HepG2 (cell line): ENCODE measurements at regions of chr22 and their contacts with region 1.

Region 1: DNA sequence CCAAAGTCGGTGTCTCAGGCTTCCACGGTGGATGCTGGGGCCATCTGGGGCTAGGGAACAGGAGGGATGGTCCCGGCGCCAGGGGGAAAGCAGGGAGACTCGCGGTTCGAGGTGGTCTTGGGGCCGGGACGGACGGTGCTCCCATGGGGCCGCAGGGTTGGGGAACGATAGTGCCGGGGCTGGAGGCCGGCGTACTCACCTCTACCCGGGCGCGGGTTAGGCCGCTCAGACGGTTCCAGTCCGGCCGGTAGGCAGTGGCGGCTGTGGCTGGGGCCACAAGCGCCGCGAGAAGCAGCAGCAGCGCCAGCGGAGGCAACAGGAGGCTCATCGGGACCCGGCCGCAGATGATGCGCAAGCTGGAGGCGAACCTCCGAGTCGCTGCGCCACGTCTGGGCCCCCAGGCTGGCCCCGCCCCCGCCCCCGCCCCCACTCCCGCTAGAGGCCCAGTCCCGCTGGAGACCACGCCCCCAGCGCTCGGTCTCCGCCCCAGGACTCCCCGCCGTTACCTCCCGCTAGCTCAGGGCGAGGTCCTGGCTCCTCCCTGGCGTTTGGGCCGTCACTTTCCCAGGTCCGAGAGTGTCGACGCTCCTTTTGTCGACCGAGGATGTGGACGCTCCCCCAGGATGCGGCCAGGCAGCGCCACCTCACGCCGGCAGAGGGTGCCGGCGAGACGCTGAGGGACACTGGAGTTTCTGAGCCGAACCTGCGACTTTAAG is at the start of gene SELENOM:
- DNase-seq: peak; percentile 86
- ATAC-seq: peak; percentile 90
- H3K4me3 ChIP-seq: peak within 1 kb of the TSS; percentile 39 to 64 (median 44); a peak in 5 of 6 replicates
- H3K27ac ChIP-seq: no peak within 1 kb of the TSS
- H3K4me1 ChIP-seq: peaks cover 28% of the 10 kb centered on the region
- H3K27me3 ChIP-seq: no peaks in the 10 kb centered on the region
- CTCF ChIP-seq: peak; percentile 95
- EP300 ChIP-seq: no peak
- POLR2A ChIP-seq: no peak
- RAD21 ChIP-seq: peak; percentile 90
- total RNA-seq, gene SELENOM: 2.4 and 4.1 TPM in 2 replicates

Region 2: GRCh38 chr22:30555282-30556210 is 551.8 kb before region 1 on chr22:
- CTCF ChIA-PET with region 1: no interaction called
- POLR2A ChIA-PET with region 1: no interaction called
- in situ Hi-C with region 1: no loop called
- intact Hi-C with region 1: no loop called
- DNase-seq: no peak
- ATAC-seq: 0 out of 3 replicates have a peak, but pooled peaks have one; percentile 17
- H3K4me3 ChIP-seq: no peak overlapping the region
- H3K27ac ChIP-seq: no peak overlapping the region
- H3K4me1 ChIP-seq: peaks cover 13% of the 10 kb centered on the region
- H3K27me3 ChIP-seq: no peaks in the 10 kb centered on the region
- CTCF ChIP-seq: peak; percentile 64
- EP300 ChIP-seq: no peak
- POLR2A ChIP-seq: no peak
- RAD21 ChIP-seq: peak; percentile 41; the same call in 1 of the 2 replicates

Region 3: DNA sequence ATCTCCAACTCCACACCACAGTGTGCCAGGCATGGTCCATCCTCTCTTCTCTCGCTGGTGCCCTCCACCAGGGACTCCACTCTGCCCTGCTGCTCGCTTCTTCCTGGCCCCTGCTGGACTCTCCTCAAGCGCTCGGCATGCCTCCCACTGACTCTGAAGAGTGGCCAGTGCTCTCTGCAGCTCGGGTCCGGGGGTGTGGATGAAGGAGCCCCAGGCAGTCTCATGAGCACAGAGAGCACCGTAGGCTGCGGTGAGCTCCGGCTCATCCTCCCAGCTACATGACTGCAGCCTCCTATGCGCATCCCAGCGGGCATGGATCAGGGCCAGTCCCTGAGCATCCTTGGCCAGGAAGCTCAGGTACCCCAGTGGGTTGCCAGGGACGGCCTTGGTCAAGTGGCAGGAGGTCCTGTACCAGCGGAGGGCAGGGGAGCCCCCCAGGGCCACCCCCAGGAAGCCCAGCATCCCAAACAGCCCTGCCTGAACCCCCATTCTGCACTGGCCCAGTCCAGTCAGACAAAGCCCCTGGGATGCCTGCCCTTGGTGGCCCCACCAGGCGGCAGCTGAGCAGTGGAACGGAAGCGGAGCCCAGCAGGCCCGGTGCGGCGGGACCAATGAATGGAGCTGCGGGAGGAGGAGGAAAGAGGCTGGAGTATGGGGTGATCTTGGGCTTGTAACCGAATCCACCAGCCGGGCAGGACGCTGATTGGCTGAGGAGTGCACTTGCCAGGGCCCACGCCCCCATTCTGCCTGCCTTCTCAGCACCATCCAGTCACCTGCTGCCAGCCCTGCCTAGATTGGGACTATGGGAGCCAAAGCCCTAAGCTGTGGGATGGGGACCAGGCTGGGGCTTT is 32.8 kb after region 1 on chr22 and contains the start of gene PLA2G3:
- CTCF ChIA-PET with region 1: no interaction called
- POLR2A ChIA-PET with region 1: interaction called, 4 read pairs
- in situ Hi-C with region 1: loop called (anchors 5 kb)
- intact Hi-C with region 1: loop called (anchors 1 kb)
- DNase-seq: peak; percentile 50
- ATAC-seq: peak; percentile 82
- H3K4me3 ChIP-seq: no peak within 1 kb of the TSS
- H3K27ac ChIP-seq: no peak within 1 kb of the TSS
- H3K4me1 ChIP-seq: peaks cover 16% of the 10 kb centered on the region
- H3K27me3 ChIP-seq: peaks cover 6 to 48% of the 10 kb centered on the region in 2 experiments; a peak in 4 of 5 replicates
- CTCF ChIP-seq: peak; percentile 44; the same call in 1 of the 2 replicates
- EP300 ChIP-seq: no peak
- POLR2A ChIP-seq: no peak
- RAD21 ChIP-seq: no peak
- total RNA-seq, gene PLA2G3: 0.11 and 0.42 TPM in 2 replicates